K562 (cell line): ENCODE measurements at regions of chr1 and their contacts with region 1.

Region 1: DNA sequence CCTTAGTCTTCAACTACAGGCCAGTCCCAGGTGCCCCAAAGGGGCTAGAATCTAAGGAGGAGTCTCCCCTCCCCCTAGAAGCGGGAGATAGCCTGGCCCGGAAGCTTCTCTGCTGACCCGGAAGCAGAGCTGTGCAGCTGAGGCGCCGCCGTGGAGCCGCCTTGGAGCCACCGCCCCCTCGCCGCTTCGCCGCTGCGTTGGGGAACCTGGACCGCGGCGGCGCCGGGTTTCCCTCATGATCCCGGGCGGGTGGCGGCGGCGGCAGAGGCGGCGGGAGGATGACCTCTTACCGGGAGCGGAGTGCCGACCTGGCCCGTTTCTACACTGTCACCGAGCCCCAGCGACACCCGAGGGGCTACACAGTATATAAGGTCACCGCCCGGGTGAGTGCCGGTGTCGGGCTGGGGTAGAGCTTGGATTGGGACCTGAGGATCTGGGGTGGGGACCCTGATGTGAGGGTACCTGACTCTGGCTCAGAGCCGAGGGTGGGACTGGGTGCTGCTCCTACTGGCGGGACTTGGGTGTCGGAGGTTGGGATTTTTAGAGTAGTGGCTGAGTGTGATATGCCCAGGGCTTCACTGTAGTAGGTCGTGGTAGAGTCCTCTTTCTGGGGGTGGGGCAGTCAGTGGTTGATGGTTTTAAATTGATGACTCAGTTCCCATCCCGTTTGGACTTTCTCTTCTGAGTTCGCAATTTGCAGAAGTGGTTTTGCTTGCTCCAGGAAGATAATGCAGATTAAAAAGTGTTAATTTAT is at the start of gene RPS6KC1:
- DNase-seq: peak; percentile 92 to 97 (median 93)
- ATAC-seq: peak; percentile 89
- H3K4me3 ChIP-seq: peak within 1 kb of the TSS; percentile 76
- H3K27ac ChIP-seq: peak within 1 kb of the TSS; percentile 92
- H3K4me1 ChIP-seq: peaks cover 33 to 71% of the 10 kb centered on the region in 2 experiments
- H3K27me3 ChIP-seq: no peaks in the 10 kb centered on the region
- CTCF ChIP-seq: no peak; a peak in 1 of 6 replicates
- EP300 ChIP-seq: peak; percentile 74
- POLR2A ChIP-seq: peak; percentile 84
- RAD21 ChIP-seq: 0 out of 4 replicates have a peak, but pooled peaks of 1 of the 2 experiments have one; percentile 19
- polyA plus RNA-seq, gene RPS6KC1: 4.3 to 7.6 TPM

Region 2: DNA sequence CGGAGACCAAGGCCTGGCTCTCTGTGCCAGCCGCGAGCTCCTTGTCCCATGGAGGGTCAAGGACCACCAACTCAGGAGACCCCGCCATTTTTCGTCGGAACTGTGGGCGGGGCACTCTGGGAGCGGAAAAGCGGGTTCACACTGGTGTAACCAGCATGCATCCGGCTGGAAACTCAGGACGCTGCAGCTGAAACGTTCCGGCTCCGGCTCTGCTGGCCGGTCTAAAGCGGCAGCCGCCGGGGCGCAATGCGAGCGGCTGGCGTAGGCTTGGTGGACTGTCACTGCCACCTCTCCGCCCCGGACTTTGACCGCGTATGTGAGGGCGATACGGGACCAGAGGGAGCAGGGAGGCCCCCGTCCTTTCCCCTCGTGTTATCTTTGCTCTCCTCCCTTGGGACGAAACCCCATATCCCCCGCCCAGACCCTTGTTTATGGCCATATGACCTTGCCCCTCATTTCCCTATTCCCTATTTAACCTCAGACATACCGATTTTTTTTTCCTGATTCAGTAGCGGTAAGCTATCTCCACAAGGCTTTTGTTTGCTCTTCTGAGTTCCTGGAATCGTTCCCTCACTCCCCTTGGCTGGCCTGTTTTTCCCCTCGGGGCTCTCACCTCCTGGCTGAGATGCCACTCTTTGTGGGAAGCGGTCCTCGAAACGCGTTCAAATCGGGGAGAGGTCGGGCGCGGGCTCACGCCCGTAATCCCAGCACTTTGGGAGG is 259.5 kb before region 1 on chr1 and contains the starts of genes NSL1 and TATDN3:
- CTCF ChIA-PET with region 1: no interaction called
- POLR2A ChIA-PET with region 1: no interaction called
- in situ Hi-C with region 1: no loop called
- intact Hi-C with region 1: loop called (anchors 2 kb)
- DNase-seq: peak; percentile 75 to 98 (median 80)
- ATAC-seq: peak; percentile 84
- H3K4me3 ChIP-seq: peak within 1 kb of the TSS; percentile 72
- H3K27ac ChIP-seq: peak within 1 kb of the TSS; percentile 92
- H3K4me1 ChIP-seq: peaks cover 17 to 30% of the 10 kb centered on the region in 2 experiments
- H3K27me3 ChIP-seq: no peaks in the 10 kb centered on the region
- CTCF ChIP-seq: peak in 1 of 3 experiments; percentile 21; a peak in 2 of 6 replicates
- EP300 ChIP-seq: peak; percentile 70
- POLR2A ChIP-seq: peak; percentile 98
- RAD21 ChIP-seq: peak in 1 of 2 experiments; percentile 8; a peak in 1 of 4 replicates
- polyA plus RNA-seq, gene NSL1: 85.9 to 105 TPM
- polyA plus RNA-seq, gene TATDN3: 68.1 to 79.9 TPM

Region 3: DNA sequence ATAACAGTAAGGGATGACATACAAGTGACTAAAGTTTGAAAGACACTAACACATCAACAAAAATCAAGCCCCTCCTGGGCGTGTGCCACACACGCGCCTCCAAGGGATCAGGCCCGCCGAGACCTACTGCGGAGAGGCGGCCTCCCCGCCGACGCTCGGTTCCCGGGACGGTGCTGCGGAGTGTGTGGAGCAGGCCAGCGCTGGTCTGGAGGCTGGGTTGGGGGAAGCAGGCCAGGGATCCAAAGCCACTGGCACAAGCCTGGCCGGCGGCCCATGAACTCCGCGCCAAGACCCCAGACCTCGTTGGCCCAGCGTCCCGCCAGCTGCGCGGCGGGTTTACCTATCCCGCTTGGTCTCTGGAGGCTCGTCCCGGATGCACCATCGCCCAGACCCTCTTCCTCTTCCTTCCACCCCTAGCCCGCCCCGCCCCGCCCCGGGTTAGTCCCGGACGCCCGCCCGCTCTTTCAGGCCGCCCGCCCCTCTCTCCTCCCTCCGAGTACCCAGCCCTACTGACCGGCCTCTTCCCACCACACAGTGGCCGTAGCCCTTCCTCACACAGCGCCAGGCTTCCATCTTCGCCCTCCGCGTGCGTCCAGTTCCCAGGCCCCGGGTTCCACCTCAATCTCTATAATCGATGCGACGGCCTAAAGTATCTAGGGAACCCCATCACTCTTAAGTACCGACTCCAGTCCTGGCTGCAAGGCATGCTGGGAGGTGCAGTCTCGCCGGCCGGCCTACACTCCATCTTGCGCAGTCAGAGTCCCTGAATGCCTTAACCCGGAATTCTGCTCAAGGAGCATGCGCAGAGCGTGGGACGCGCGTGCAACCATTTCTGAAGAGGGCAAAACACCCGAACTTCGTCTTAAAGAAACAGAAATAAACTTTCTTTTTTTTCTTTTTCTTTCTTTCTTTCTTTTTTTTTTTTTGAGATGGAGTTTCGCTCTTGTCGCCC is 35.9 kb before region 1 on chr1 and contains the start of gene ANGEL2:
- CTCF ChIA-PET with region 1: no interaction called
- POLR2A ChIA-PET with region 1: interaction called, 6 read pairs
- in situ Hi-C with region 1: no loop called
- intact Hi-C with region 1: loop called (anchors 1 kb)
- DNase-seq: peak; percentile 91 to 100 (median 94)
- ATAC-seq: peak; percentile 91
- H3K4me3 ChIP-seq: peak within 1 kb of the TSS; percentile 72
- H3K27ac ChIP-seq: peak within 1 kb of the TSS; percentile 65
- H3K4me1 ChIP-seq: peaks cover 15 to 22% of the 10 kb centered on the region in 2 experiments
- H3K27me3 ChIP-seq: no peaks in the 10 kb centered on the region
- CTCF ChIP-seq: no peak
- EP300 ChIP-seq: peak; percentile 22; the same call in 1 of the 2 replicates
- POLR2A ChIP-seq: peak; percentile 85
- RAD21 ChIP-seq: no peak
- polyA plus RNA-seq, gene ANGEL2: 6.8 to 10.9 TPM

Region 4: DNA sequence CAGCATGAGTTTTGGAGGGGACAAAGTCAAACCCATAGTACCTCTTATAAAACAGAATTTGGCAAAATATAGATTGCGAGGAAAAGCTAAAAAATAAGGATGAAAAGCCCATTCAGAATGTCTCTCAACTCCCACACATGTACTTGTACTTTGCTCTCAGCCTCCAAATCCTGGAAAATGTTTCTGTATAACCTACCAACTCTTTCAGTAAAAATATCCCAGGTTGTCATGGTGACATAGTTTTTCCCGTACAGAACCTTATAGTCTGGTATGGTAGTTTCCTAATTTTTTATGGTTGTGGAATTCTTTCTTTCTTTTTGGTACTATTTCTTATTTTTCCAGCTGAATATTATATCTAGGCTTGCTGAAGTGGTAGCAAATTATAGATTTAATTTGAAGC is 15.7 kb before region 1 on chr1:
- CTCF ChIA-PET with region 1: no interaction called
- POLR2A ChIA-PET with region 1: interaction called, 20 read pairs
- in situ Hi-C with region 1: no loop called
- intact Hi-C with region 1: no loop called
- DNase-seq: no peak
- ATAC-seq: no peak
- H3K4me3 ChIP-seq: no peak overlapping the region
- H3K27ac ChIP-seq: no peak overlapping the region
- H3K4me1 ChIP-seq: no peaks in the 10 kb centered on the region; a peak in 3 of 5 replicates
- H3K27me3 ChIP-seq: no peaks in the 10 kb centered on the region
- CTCF ChIP-seq: no peak
- EP300 ChIP-seq: no peak
- POLR2A ChIP-seq: no peak
- RAD21 ChIP-seq: no peak

Region 5: GRCh38 chr1:213162338-213162737 is 111.0 kb after region 1 on chr1:
- CTCF ChIA-PET with region 1: no interaction called
- POLR2A ChIA-PET with region 1: no interaction called
- in situ Hi-C with region 1: no loop called
- intact Hi-C with region 1: no loop called
- DNase-seq: no peak
- ATAC-seq: no peak
- H3K4me3 ChIP-seq: no peak overlapping the region
- H3K27ac ChIP-seq: no peak overlapping the region
- H3K4me1 ChIP-seq: no peaks in the 10 kb centered on the region
- H3K27me3 ChIP-seq: no peaks in the 10 kb centered on the region
- CTCF ChIP-seq: no peak
- EP300 ChIP-seq: no peak
- POLR2A ChIP-seq: no peak
- RAD21 ChIP-seq: no peak